K562 (cell line): ENCODE measurements at regions of chr11 and their contacts with region 1.

Region 1: DNA sequence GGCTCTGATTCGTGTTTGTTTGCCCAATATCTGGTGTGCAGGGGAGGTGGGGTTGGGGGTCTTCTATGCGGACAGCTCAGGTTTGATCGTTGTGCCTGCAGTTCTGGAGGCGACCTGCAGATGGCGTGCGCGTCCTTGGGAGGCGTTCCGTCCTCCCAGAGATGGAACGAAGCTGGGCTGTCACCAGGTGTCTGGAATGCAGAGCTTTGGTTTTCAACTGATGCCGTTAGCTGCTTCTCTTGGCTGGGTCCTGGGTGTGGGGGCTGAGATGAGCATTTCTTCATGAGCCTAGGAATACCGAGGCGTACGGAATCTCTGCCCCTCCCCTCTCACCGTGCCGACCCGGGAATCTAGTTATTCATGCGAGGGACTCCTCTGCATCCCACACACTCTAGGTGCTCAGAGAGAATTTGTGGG is 98.6 kb downstream of the CEP164 start:
- DNase-seq: peak; percentile 76 to 84 (median 82)
- ATAC-seq: peak; percentile 87
- H3K4me3 ChIP-seq: no peak overlapping the region
- H3K27ac ChIP-seq: no peak overlapping the region
- H3K4me1 ChIP-seq: peaks cover 0 to 5% of the 10 kb centered on the region in 2 experiments; a peak in 3 of 5 replicates
- H3K27me3 ChIP-seq: peaks cover 33 to 73% of the 10 kb centered on the region in 2 experiments
- CTCF ChIP-seq: peak; percentile 87 to 97 (median 91)
- EP300 ChIP-seq: no peak
- POLR2A ChIP-seq: no peak
- RAD21 ChIP-seq: peak; percentile 64 to 85

Region 2: DNA sequence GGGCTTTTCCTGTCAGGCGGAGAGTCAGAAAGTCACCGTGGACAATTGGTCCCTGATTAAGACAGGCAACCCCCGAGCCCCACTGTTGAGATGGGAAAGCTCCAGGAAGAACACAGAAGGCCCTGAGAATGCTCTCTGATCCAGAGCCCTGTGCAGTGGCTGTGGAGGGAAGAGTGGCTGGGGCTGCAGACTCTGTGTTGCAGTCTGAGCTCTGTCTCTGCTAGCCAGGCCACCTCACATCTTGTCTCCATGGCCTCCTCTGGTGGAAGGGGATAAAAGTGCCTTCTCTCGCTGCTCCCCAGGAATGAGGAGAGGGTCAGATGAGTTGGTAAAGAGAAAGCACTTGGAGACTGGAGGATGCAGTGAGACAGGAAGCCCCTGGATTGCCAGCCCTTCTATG is 42.6 kb after region 1 on chr11:
- CTCF ChIA-PET with region 1: no interaction called
- POLR2A ChIA-PET with region 1: no interaction called
- in situ Hi-C with region 1: no loop called
- intact Hi-C with region 1: loop called (anchors 1 kb)
- DNase-seq: peak in 2 of 4 experiments; percentile 11 to 43
- ATAC-seq: peak; percentile 80
- H3K4me3 ChIP-seq: no peak overlapping the region
- H3K27ac ChIP-seq: no peak overlapping the region
- H3K4me1 ChIP-seq: no peaks in the 10 kb centered on the region
- H3K27me3 ChIP-seq: peaks cover 17 to 71% of the 10 kb centered on the region in 2 experiments
- CTCF ChIP-seq: peak; percentile 41 to 44 (median 42); a peak in 4 of 6 replicates
- EP300 ChIP-seq: no peak
- POLR2A ChIP-seq: no peak
- RAD21 ChIP-seq: peak in 1 of 2 experiments; percentile 43; a peak in 2 of 4 replicates

Region 3: GRCh38 chr11:117621226-117621625 is 194.9 kb after region 1 on chr11:
- CTCF ChIA-PET with region 1: no interaction called
- POLR2A ChIA-PET with region 1: no interaction called
- in situ Hi-C with region 1: no loop called
- intact Hi-C with region 1: loop called (anchors 2 kb)
- DNase-seq: peak; percentile 16 to 61 (median 40)
- ATAC-seq: no peak
- H3K4me3 ChIP-seq: no peak overlapping the region
- H3K27ac ChIP-seq: no peak overlapping the region
- H3K4me1 ChIP-seq: no peaks in the 10 kb centered on the region
- H3K27me3 ChIP-seq: peaks cover 0 to 11% of the 10 kb centered on the region in 2 experiments; a peak in 2 of 5 replicates
- CTCF ChIP-seq: peak; percentile 43 to 63 (median 57); a peak in 5 of 6 replicates
- EP300 ChIP-seq: no peak
- POLR2A ChIP-seq: no peak
- RAD21 ChIP-seq: peak in 1 of 2 experiments; percentile 45; a peak in 2 of 4 replicates

Region 4: DNA sequence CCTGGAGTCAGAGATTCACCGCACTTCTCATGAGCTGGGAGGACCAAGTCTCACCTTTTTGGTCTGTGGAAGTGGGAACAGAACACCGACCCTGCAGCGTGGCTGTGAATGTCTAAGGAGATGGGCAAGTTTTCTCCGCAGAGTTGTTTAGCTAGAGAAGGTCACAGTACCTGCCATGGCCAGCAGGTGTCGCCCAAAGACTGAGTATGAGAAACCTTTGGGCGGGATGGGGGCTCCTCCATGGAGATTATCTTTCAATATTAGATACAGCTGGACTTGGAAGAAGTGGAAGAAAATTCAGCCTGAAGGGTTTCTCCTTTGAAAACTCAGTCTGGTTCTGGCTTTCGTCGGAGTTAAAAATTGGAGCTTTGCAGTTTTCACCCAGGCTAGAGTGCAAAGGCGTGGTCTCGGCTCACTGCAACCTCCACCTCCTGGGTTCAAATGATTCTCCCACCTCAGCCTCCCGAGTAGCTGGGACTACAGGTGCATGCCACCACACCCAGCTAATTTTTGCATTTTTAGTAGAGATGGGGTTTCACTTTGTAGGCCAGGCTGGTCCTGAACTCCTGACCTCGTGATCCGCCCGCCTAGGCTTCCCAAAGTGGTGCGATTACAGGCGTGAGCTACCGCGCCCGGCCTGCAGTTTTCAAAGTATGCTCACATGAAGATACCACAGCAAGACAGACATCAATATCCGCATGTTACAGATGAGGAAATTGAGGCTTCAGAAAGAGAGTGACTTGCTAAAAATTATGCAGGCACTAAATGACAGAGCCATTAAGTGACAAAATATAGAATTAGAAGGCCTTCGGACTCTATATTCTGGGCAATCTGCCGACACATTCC is 381.4 kb after region 1 on chr11:
- CTCF ChIA-PET with region 1: interaction called, 4 read pairs
- POLR2A ChIA-PET with region 1: no interaction called
- in situ Hi-C with region 1: no loop called
- intact Hi-C with region 1: loop called (anchors 2 kb)
- DNase-seq: peak; percentile 78 to 82 (median 80)
- ATAC-seq: peak; percentile 72
- H3K4me3 ChIP-seq: no peak overlapping the region
- H3K27ac ChIP-seq: no peak overlapping the region
- H3K4me1 ChIP-seq: peaks cover 13 to 14% of the 10 kb centered on the region in 2 experiments; a peak in 4 of 5 replicates
- H3K27me3 ChIP-seq: peaks cover 0 to 29% of the 10 kb centered on the region in 2 experiments; a peak in 3 of 5 replicates
- CTCF ChIP-seq: peak; percentile 84 to 93 (median 88)
- EP300 ChIP-seq: no peak
- POLR2A ChIP-seq: no peak
- RAD21 ChIP-seq: peak; percentile 66 to 85

Region 5: DNA sequence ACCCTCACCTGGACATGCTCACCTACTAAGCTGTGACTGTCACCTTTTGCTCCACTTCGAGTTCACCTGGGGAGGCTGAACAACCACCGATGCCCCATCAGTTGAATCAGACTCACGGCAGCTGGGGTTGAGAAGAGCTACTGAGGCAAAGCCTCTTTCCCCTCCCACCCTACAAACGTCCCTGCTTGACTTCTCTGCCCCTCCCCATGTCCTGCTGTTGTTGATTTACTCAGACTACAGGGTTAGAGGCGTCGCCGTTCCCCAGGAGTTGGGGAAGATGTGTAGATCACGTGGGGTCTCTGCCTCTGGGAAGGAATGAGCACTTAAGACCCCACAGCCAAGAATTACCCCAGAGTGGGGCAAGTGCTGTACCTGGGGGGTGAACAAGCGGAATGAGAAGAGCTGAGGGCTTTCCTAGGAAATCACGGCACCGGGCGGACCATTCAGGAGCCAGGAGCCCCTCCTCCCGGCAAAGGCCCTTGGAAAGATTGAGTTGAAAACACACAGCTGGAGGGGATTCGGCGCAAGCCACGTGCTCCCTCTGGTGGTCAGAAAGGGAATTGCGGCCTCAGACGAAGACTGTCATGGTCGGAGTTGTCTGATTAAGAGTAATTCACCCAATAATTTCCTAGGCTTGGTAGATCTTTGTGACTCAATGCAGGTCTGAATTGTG is 391.2 kb after region 1 on chr11:
- CTCF ChIA-PET with region 1: interaction called, 10 read pairs
- POLR2A ChIA-PET with region 1: interaction called, 3 read pairs
- in situ Hi-C with region 1: no loop called
- intact Hi-C with region 1: no loop called
- DNase-seq: peak; percentile 65 to 78 (median 76)
- ATAC-seq: peak; percentile 84
- H3K4me3 ChIP-seq: no peak overlapping the region
- H3K27ac ChIP-seq: no peak overlapping the region
- H3K4me1 ChIP-seq: peaks cover 0 to 30% of the 10 kb centered on the region in 2 experiments; a peak in 3 of 5 replicates
- H3K27me3 ChIP-seq: peaks cover 3 to 13% of the 10 kb centered on the region in 2 experiments; a peak in 3 of 5 replicates
- CTCF ChIP-seq: peak; percentile 86 to 99 (median 97)
- EP300 ChIP-seq: no peak
- POLR2A ChIP-seq: no peak
- RAD21 ChIP-seq: peak; percentile 75 to 88